ENCODE measurements at regions of chr18 and their contacts with region 1.

Region 1: GRCh38 chr18:63518178-63519012 is 23.8 kb upstream of the SERPINB12 start:
- DNase-seq: no peak
- ATAC-seq: peak; percentile 80 to 82
- H3K4me3 ChIP-seq: no peak overlapping the region
- H3K27ac ChIP-seq: no peak overlapping the region
- H3K4me1 ChIP-seq: no peaks in the 10 kb centered on the region
- H3K27me3 ChIP-seq: no peaks in the 10 kb centered on the region

Region 2: DNA sequence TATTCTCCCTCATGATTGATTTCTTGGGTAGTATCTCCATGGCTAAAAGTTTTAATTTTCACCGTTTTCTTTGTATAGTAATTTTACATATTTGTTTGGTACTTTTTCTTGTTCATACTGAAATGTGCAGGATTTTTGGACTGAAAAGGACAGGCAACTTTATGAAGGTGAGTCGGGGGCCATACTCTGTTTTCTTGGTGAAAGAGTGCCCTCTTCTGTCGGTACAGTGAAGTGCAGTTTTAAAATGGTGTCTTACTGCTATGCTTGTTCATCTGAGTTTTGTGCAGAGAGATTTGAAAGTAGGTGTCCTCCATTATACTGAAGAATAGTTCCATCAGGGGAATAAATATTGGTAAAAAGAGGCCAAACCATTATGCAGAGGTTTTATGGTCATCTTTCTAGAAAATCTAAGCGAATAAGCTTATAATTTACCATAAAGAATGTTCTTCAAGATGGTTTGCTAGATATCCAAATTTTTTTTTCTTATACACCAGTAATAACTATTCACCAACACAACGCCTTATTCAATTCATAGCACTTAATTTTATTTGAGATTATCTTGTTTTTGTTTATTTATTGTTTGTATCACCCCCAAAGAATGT is 60.1 kb after region 1 on chr18:
- intact Hi-C with region 1: loop called (anchors 2 to 10 kb)
- DNase-seq: no peak
- ATAC-seq: peak in 1 of 2 donors; percentile 40
- H3K4me3 ChIP-seq: no peak overlapping the region
- H3K27ac ChIP-seq: no peak overlapping the region
- H3K4me1 ChIP-seq: no peaks in the 10 kb centered on the region
- H3K27me3 ChIP-seq: no peaks in the 10 kb centered on the region

Region 3: GRCh38 chr18:63775166-63775730 is 256.9 kb after region 1 on chr18 and contains the start of gene SERPINB7:
- intact Hi-C with region 1: no loop called
- DNase-seq: no peak
- ATAC-seq: no peak
- H3K4me3 ChIP-seq: no peak within 1 kb of the TSS
- H3K27ac ChIP-seq: no peak within 1 kb of the TSS
- H3K4me1 ChIP-seq: no peaks in the 10 kb centered on the region
- H3K27me3 ChIP-seq: no peaks in the 10 kb centered on the region
- total RNA-seq, gene SERPINB7: not detected

Region 4: GRCh38 chr18:63848159-63848558 is 329.8 kb after region 1 on chr18:
- intact Hi-C with region 1: loop called (anchors 5 to 10 kb)
- DNase-seq: no peak
- ATAC-seq: no peak
- H3K4me3 ChIP-seq: no peak overlapping the region
- H3K27ac ChIP-seq: no peak overlapping the region
- H3K4me1 ChIP-seq: no peaks in the 10 kb centered on the region
- H3K27me3 ChIP-seq: no peaks in the 10 kb centered on the region

Region 5: DNA sequence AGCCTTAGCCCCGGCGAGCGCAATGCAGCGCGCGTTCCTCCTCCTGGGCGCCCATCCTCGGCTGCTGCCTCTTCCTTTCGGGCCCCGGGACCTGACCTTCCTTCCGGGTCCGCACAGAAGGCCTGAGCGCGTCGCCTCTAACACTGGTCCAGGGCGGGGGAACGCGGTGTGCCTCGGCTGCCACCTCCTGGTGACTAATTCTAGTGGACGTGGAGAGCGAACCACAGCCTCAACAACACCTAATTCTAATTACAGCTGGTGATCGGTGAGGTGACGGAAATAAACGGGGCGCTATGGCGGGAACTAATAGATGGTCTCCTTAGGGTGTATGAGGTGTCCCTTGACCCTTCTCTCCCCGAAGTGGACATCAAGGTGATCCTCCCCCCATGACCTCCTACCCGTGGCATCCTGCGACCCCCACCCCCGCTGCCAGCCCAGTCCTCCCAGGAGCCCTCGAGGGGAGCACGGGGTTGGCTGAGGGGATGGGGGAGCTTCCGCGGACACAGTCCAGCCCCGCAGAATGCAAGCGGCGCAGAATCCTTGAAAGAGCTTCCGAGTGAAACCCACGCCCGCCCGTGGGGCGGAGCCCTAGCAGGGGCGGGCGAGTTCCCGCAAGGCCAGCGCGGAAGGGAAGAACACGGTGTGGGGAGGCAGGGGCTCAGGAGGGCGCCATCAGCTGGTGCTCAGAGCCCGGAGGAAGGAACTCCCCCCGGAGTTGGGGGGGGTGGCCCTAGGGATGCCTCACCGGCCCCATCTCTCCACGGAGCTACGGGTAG is 417.9 kb after region 1 on chr18:
- intact Hi-C with region 1: loop called in 2 of 4 experiments (anchors 5 kb)
- DNase-seq: peak; percentile 87 to 94 (median 92)
- ATAC-seq: peak; percentile 99
- H3K4me3 ChIP-seq: peak overlapping the region; percentile 34
- H3K27ac ChIP-seq: no peak overlapping the region
- H3K4me1 ChIP-seq: no peaks in the 10 kb centered on the region
- H3K27me3 ChIP-seq: no peaks in the 10 kb centered on the region

Measured in right cardiac atrium (tissue), 5 donors.